CD8-positive, alpha-beta T cell (primary cell): ENCODE measurements at regions of chr17 and their contacts with region 1.

Region 1: GRCh38 chr17:63773381-63774140 is at the start of gene CCDC47:
- DNase-seq: peak; percentile 95 to 100 (median 97)
- ATAC-seq: peak; percentile 79
- H3K4me3 ChIP-seq: peak within 1 kb of the TSS; percentile 84 to 95
- H3K4me3 Mint-ChIP-seq: peak within 1 kb of the TSS; percentile 97
- H3K27ac ChIP-seq: peak within 1 kb of the TSS; percentile 86 to 97
- H3K27ac Mint-ChIP-seq: peak within 1 kb of the TSS; percentile 98
- H3K4me1 ChIP-seq: peaks cover 41% of the 10 kb centered on the region
- H3K4me1 Mint-ChIP-seq: peaks cover 60% of the 10 kb centered on the region
- H3K27me3 ChIP-seq: no peaks in the 10 kb centered on the region
- H3K27me3 Mint-ChIP-seq: no peaks in the 10 kb centered on the region
- CTCF ChIP-seq: no peak
- total RNA-seq, gene CCDC47: 33.1 to 34.6 TPM

Region 2: GRCh38 chr17:63707151-63707550 is 66.4 kb before region 1 on chr17:
- CTCF ChIA-PET with region 1: interaction called, 4 read pairs
- POLR2A ChIA-PET with region 1: interaction called, 149 read pairs
- intact Hi-C with region 1: no loop called
- DNase-seq: peak in 6 of 9 experiments; percentile 36 to 76 (median 64)
- ATAC-seq: peak; percentile 58
- H3K4me3 ChIP-seq: peak overlapping the region; percentile 10 to 42
- H3K4me3 Mint-ChIP-seq: peak overlapping the region; percentile 78
- H3K27ac ChIP-seq: peak overlapping the region; percentile 67 to 73
- H3K27ac Mint-ChIP-seq: peak overlapping the region; percentile 94
- H3K4me1 ChIP-seq: peaks cover 85% of the 10 kb centered on the region
- H3K4me1 Mint-ChIP-seq: peaks cover 83% of the 10 kb centered on the region
- H3K27me3 ChIP-seq: no peaks in the 10 kb centered on the region
- H3K27me3 Mint-ChIP-seq: no peaks in the 10 kb centered on the region
- CTCF ChIP-seq: no peak

Region 3: DNA sequence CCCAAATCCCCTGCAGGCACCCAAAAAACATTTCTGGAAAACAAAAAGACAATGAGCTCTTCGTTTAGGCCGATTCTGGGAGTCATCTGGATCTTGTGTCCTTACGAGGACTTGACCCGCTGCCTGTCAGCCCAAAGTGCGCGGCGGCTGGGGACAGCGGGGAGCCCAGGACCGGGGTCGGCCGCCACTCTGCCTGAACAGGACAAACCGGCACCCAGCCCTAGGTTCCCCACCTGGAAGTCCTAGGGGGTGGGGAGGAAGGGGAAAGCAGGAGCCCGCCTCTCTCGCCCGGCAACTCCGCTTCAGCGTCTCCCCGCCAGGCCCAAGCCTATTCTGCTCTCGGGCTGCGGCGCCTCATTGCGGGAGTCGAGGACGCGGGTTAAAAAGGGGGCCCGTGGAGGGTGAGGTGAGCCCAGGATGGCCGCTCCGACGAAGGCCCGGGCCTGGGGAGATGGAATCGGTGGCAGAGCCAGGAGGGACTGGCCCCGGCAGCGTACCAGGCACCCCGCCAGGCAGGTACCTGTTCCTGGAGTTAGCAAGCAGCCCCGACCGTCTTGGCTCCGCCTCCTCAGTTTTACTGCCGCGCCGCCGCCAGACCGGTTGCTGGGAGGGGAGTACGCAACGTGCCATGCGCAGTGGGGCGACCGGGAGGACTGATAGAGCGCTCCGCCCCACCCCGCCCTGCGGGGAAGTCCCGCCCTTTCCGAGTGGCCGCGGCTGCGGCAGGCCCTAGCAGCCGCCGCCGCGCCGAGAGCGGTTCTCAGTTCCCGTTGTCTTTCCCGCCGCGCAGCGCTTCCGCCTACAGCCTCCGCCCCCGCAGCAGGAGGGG is 32.1 kb before region 1 on chr17 and contains the start of gene STRADA:
- CTCF ChIA-PET with region 1: interaction called, 3 read pairs
- POLR2A ChIA-PET with region 1: interaction called, 34 read pairs
- intact Hi-C with region 1: loop called (anchors 1 kb)
- DNase-seq: peak; percentile 97 to 100 (median 99)
- ATAC-seq: peak; percentile 92
- H3K4me3 ChIP-seq: peak within 1 kb of the TSS; percentile 58 to 86
- H3K4me3 Mint-ChIP-seq: peak within 1 kb of the TSS; percentile 88
- H3K27ac ChIP-seq: peak within 1 kb of the TSS; percentile 81 to 91
- H3K27ac Mint-ChIP-seq: peak within 1 kb of the TSS; percentile 94
- H3K4me1 ChIP-seq: peaks cover 14% of the 10 kb centered on the region
- H3K4me1 Mint-ChIP-seq: peaks cover 27% of the 10 kb centered on the region
- H3K27me3 ChIP-seq: no peaks in the 10 kb centered on the region
- H3K27me3 Mint-ChIP-seq: no peaks in the 10 kb centered on the region
- CTCF ChIP-seq: no peak
- total RNA-seq, gene STRADA: 54.7 to 63.6 TPM

Region 4: GRCh38 chr17:63827002-63827771 is 53.6 kb after region 1 on chr17 and contains the starts of genes FTSJ3 and PSMC5:
- CTCF ChIA-PET with region 1: interaction called, 4 read pairs
- POLR2A ChIA-PET with region 1: interaction called, 11 read pairs
- intact Hi-C with region 1: loop called (anchors 1 kb)
- DNase-seq: peak; percentile 91 to 99 (median 95)
- ATAC-seq: peak; percentile 92
- H3K4me3 ChIP-seq: peak within 1 kb of the TSS; percentile 74 to 75
- H3K4me3 Mint-ChIP-seq: peak within 1 kb of the TSS; percentile 100
- H3K27ac ChIP-seq: peak within 1 kb of the TSS; percentile 66 to 96
- H3K27ac Mint-ChIP-seq: peak within 1 kb of the TSS; percentile 98
- H3K4me1 ChIP-seq: peaks cover 56% of the 10 kb centered on the region
- H3K4me1 Mint-ChIP-seq: peaks cover 81% of the 10 kb centered on the region
- H3K27me3 ChIP-seq: no peaks in the 10 kb centered on the region
- H3K27me3 Mint-ChIP-seq: no peaks in the 10 kb centered on the region
- CTCF ChIP-seq: peak; percentile 51
- total RNA-seq, gene FTSJ3: 60.0 to 70.3 TPM
- total RNA-seq, gene PSMC5: 88.5 to 90.3 TPM

Region 5: DNA sequence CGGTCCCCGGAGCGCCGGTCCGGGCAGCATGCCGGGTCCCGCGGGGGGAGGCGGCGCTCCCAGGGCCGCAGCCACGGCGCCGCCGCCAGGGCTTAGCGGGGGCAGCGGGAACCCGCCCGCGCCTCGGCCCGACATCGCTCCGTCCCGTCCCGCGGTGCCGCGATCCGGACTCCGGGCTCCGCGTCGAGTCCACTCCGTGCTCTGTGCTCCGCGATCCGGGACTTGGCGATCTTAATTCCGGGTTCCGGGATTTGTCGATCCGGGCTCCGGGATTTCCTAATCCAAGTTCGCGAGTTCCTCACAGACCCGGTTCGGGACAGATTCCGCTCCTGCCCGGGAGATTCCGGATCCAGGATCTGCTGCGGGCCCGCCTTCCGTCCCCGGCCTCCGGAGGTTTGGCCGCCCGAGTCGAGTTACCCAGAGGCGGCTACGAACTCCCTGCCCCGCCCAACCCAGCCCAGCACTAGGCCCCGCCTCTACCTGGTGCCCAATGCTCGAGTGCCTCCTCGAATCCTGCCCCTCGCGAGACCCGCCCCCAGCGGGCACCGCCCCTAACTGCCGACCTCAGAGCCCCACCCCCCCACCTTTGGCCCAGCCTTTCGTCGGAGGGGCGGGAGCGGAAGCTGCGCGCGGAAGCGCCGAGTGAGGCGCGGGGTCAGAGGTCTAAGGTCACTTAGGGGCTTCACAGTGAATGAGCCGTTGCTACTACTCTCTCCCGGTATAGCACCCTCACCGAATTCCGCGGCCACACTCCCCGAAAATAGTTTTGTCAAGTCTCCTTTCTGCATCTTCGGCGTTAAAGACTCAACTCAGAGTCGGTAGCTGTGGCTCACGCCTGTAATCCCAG is 69.2 kb after region 1 on chr17 and contains the start of gene SMARCD2:
- CTCF ChIA-PET with region 1: interaction called, 6 read pairs
- POLR2A ChIA-PET with region 1: interaction called, 3 read pairs
- intact Hi-C with region 1: loop called (anchors 1 kb)
- DNase-seq: peak; percentile 99
- ATAC-seq: peak; percentile 91
- H3K4me3 ChIP-seq: peak within 1 kb of the TSS; percentile 86 to 95
- H3K4me3 Mint-ChIP-seq: peak within 1 kb of the TSS; percentile 92
- H3K27ac ChIP-seq: peak within 1 kb of the TSS; percentile 88 to 95
- H3K27ac Mint-ChIP-seq: peak within 1 kb of the TSS; percentile 92
- H3K4me1 ChIP-seq: peaks cover 43% of the 10 kb centered on the region
- H3K4me1 Mint-ChIP-seq: peaks cover 30% of the 10 kb centered on the region
- H3K27me3 ChIP-seq: no peaks in the 10 kb centered on the region
- H3K27me3 Mint-ChIP-seq: no peaks in the 10 kb centered on the region
- CTCF ChIP-seq: no peak
- total RNA-seq, gene SMARCD2: 121 TPM